Dendritic cell treated with granulocyte-macrophage colony-stimulating factor and Interleukin-4, amounts not matched to agents 40 ng/mL and 50 ng/mL, for 4 days (primary cell): ENCODE measurements at regions of chr1 and their contacts with region 1.

Region 1: GRCh38 chr1:28112388-28113241 is 24.2 kb upstream of the EYA3 start:
- H3K4me3 Mint-ChIP-seq: peak overlapping the region; percentile 13
- H3K27ac Mint-ChIP-seq: peak overlapping the region; percentile 96
- H3K4me1 Mint-ChIP-seq: peaks cover 73% of the 10 kb centered on the region
- H3K27me3 Mint-ChIP-seq: no peaks in the 10 kb centered on the region

Region 2: DNA sequence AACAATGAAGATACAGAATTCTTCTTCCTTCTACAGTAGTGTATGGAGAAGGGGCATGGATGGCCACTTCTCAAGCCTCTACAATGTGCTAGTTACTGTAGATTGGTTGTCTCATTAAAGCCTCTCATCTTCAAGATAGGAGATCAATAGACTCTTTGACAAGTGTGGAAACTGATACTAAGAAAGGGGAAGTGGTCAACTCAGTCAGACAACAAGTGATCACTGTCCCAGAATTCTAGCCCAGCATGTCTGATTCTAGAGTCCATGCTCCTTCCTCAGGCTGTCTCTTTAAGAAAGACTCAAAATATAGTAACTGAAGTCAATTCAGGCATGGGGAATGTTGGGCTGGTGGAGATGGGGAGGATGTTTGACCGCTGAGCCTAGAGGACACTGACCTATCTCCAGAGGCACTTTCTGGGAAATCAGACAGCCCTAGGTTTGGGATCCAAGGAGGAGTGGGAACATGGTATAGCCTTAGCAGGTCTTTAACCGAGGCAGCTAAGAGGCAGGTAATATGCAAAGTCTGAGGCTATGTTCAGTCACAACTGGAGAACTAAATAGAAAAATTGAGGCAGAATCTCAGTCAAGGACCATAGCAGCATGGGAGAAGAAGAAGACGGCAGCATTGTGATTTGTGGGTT is 15.1 kb after region 1 on chr1:
- intact Hi-C with region 1: loop called (anchors 2 kb)
- H3K4me3 Mint-ChIP-seq: no peak overlapping the region
- H3K27ac Mint-ChIP-seq: peak overlapping the region; percentile 94
- H3K4me1 Mint-ChIP-seq: peaks cover 80% of the 10 kb centered on the region
- H3K27me3 Mint-ChIP-seq: no peaks in the 10 kb centered on the region

Region 3: DNA sequence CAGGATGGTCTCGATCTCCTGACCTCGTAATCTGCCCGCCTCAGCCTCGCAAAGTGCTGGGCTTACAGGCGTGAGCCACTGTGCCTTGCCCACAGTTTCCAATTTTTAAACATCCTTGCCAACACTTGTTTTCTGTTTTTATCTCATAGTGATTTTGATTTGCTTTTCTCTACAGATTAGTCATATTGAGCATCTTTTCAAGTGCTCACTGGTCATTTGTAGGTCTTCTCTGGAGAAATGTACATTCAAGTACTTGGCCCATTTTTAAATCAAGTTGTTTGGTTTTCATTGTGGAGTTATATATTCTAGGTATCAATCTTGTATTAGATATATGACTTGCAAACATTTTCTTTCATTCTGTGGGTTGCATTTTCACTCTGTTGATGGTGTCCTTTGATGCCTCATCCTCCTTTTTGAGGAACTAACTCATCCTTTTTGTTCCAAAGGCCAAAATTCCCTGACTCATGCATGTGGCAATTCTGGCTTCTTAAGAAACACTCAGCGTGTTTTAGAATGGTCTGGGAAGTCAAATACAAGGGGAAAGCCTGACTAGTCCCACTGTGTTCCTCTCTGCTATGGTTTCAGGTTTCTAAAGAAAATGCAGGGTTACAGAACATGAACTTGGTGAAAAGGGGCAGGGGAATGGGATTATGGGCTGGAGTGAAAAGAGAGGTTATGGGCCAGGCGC is 26.6 kb after region 1 on chr1:
- intact Hi-C with region 1: loop called (anchors 1 kb)
- H3K4me3 Mint-ChIP-seq: peak overlapping the region; percentile 22
- H3K27ac Mint-ChIP-seq: peak overlapping the region; percentile 95
- H3K4me1 Mint-ChIP-seq: peaks cover 87% of the 10 kb centered on the region
- H3K27me3 Mint-ChIP-seq: no peaks in the 10 kb centered on the region

Region 4: GRCh38 chr1:28156821-28157220 is 44.2 kb after region 1 on chr1:
- intact Hi-C with region 1: no loop called
- H3K4me3 Mint-ChIP-seq: peak overlapping the region; percentile 17
- H3K27ac Mint-ChIP-seq: peak overlapping the region; percentile 80
- H3K4me1 Mint-ChIP-seq: peaks cover 91% of the 10 kb centered on the region
- H3K27me3 Mint-ChIP-seq: no peaks in the 10 kb centered on the region